ENCODE measurements at regions of chr1 and their contacts with region 1.

Region 1: GRCh38 chr1:115595279-115596079 is 46.3 kb upstream of the VANGL1 start:
- DNase-seq: peak; percentile 91
- ATAC-seq: peak; percentile 97
- H3K4me3 Mint-ChIP-seq: no peak overlapping the region
- H3K27ac Mint-ChIP-seq: no peak overlapping the region
- H3K4me1 Mint-ChIP-seq: peaks cover 3% of the 10 kb centered on the region
- H3K27me3 Mint-ChIP-seq: peaks cover 2% of the 10 kb centered on the region
- CTCF ChIP-seq: peak; percentile 88

Region 2: GRCh38 chr1:115138968-115139367 is 456.5 kb before region 1 on chr1:
- CTCF ChIA-PET with region 1: interaction called, 18 read pairs
- POLR2A ChIA-PET with region 1: no interaction called
- DNase-seq: peak; percentile 83
- ATAC-seq: peak; percentile 98
- H3K4me3 Mint-ChIP-seq: no peak overlapping the region
- H3K27ac Mint-ChIP-seq: no peak overlapping the region
- H3K4me1 Mint-ChIP-seq: peaks cover 4% of the 10 kb centered on the region; the same call in 1 of the 2 replicates
- H3K27me3 Mint-ChIP-seq: no peaks in the 10 kb centered on the region; the same call in none of the 2 replicates
- CTCF ChIP-seq: peak; percentile 66

Region 3: GRCh38 chr1:115469703-115470476 is 125.6 kb before region 1 on chr1:
- CTCF ChIA-PET with region 1: interaction called, 15 read pairs
- POLR2A ChIA-PET with region 1: no interaction called
- DNase-seq: peak; percentile 88
- ATAC-seq: peak; percentile 96
- H3K4me3 Mint-ChIP-seq: no peak overlapping the region
- H3K27ac Mint-ChIP-seq: no peak overlapping the region; the same call in 1 of the 2 replicates
- H3K4me1 Mint-ChIP-seq: peaks cover 3% of the 10 kb centered on the region; the same call in 1 of the 2 replicates
- H3K27me3 Mint-ChIP-seq: no peaks in the 10 kb centered on the region
- CTCF ChIP-seq: peak; percentile 85

Region 4: DNA sequence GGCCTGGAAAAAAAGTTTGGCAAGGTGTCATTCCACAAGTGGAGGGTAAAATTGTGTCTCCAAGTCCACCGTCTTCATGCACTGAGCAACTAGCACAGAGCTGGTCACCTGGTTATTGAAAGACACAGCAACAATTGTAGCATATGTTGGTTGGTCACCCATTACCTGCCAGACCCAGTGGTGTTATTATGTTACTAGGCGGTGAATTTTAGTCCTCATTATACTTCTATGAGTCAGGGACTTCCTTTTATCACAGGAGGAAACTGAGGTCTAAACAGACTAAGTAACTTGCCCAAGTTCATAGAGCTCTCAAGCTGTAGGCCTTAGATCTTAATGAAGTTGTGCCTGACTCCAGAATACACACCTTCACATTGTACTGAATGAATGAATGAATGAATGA is 48.6 kb before region 1 on chr1:
- CTCF ChIA-PET with region 1: interaction called, 11 read pairs
- POLR2A ChIA-PET with region 1: no interaction called
- DNase-seq: no peak
- ATAC-seq: no peak
- H3K4me3 Mint-ChIP-seq: no peak overlapping the region
- H3K27ac Mint-ChIP-seq: no peak overlapping the region
- H3K4me1 Mint-ChIP-seq: peaks cover 17% of the 10 kb centered on the region
- H3K27me3 Mint-ChIP-seq: no peaks in the 10 kb centered on the region; the same call in 1 of the 2 replicates
- CTCF ChIP-seq: no peak

Region 5: GRCh38 chr1:115564206-115564605 is 31.3 kb before region 1 on chr1:
- CTCF ChIA-PET with region 1: interaction called, 10 read pairs
- POLR2A ChIA-PET with region 1: no interaction called
- DNase-seq: peak; percentile 58
- ATAC-seq: peak; percentile 88
- H3K4me3 Mint-ChIP-seq: peak overlapping the region; percentile 56
- H3K27ac Mint-ChIP-seq: no peak overlapping the region
- H3K4me1 Mint-ChIP-seq: no peaks in the 10 kb centered on the region
- H3K27me3 Mint-ChIP-seq: peaks cover 18% of the 10 kb centered on the region
- CTCF ChIP-seq: no peak

Region 6: GRCh38 chr1:115609021-115609420 is 13.5 kb after region 1 on chr1:
- CTCF ChIA-PET with region 1: interaction called, 19 read pairs
- POLR2A ChIA-PET with region 1: no interaction called
- DNase-seq: no peak
- ATAC-seq: no peak
- H3K4me3 Mint-ChIP-seq: no peak overlapping the region
- H3K27ac Mint-ChIP-seq: no peak overlapping the region
- H3K4me1 Mint-ChIP-seq: peaks cover 6% of the 10 kb centered on the region
- H3K27me3 Mint-ChIP-seq: no peaks in the 10 kb centered on the region
- CTCF ChIP-seq: no peak

Region 7: DNA sequence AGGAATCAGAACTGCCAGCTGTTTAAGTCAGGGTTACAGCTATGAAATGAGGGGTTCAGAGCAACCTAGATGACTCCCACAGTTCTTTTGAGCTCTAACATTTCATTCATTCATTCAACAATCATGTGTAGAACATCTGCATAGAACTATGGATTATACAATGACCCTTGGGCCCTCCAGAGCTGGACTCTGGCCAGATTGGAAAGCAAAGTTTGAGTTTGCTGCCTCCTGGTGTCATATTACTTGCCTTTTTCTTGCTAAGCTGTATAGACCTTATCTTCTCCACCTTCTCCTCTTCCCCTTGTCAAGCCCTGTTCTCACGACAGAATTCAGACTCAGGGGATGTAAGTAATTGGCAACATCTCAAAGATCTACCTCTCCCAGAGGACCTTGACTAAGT is 169.1 kb after region 1 on chr1:
- CTCF ChIA-PET with region 1: interaction called, 11 read pairs
- POLR2A ChIA-PET with region 1: no interaction called
- DNase-seq: no peak
- ATAC-seq: peak; percentile 57; the same call in 1 of the 2 replicates
- H3K4me3 Mint-ChIP-seq: no peak overlapping the region
- H3K27ac Mint-ChIP-seq: no peak overlapping the region
- H3K4me1 Mint-ChIP-seq: peaks cover 13% of the 10 kb centered on the region
- H3K27me3 Mint-ChIP-seq: no peaks in the 10 kb centered on the region
- CTCF ChIP-seq: no peak